Activated T-helper 1 cell treated with anti-CD3 and anti-CD28 coated beads, Interleukin-12 subunit alpha, Interleukin-12 subunit beta, Interleukin-2, Interleukin-4 antibody, amounts not matched to agents 30 ng/mL and 10 ng/mL and 1 ng/mL, durations not matched to agents 14 hours and 24 hours and 36 hours (primary cell): ENCODE measurements at regions of chr11 and their contacts with region 1.

Region 1: GRCh38 chr11:62479631-62480201 is 60.9 kb downstream of the SCGB1A1 start:
- DNase-seq: no peak
- H3K4me3 Mint-ChIP-seq: no peak overlapping the region
- H3K27ac Mint-ChIP-seq: no peak overlapping the region
- H3K4me1 Mint-ChIP-seq: no peaks in the 10 kb centered on the region
- H3K27me3 Mint-ChIP-seq: peaks cover 1% of the 10 kb centered on the region

Region 2: GRCh38 chr11:62394825-62395538 is 84.7 kb before region 1 on chr11:
- intact Hi-C with region 1: loop called (anchors 5 kb)
- DNase-seq: peak; percentile 48
- H3K4me3 Mint-ChIP-seq: no peak overlapping the region
- H3K27ac Mint-ChIP-seq: no peak overlapping the region
- H3K4me1 Mint-ChIP-seq: peaks cover 8% of the 10 kb centered on the region
- H3K27me3 Mint-ChIP-seq: peaks cover 2% of the 10 kb centered on the region

Region 3: GRCh38 chr11:62435846-62436660 is 43.7 kb before region 1 on chr11:
- intact Hi-C with region 1: no loop called
- DNase-seq: no peak
- H3K4me3 Mint-ChIP-seq: no peak overlapping the region
- H3K27ac Mint-ChIP-seq: no peak overlapping the region
- H3K4me1 Mint-ChIP-seq: peaks cover 25% of the 10 kb centered on the region
- H3K27me3 Mint-ChIP-seq: no peaks in the 10 kb centered on the region

Region 4: DNA sequence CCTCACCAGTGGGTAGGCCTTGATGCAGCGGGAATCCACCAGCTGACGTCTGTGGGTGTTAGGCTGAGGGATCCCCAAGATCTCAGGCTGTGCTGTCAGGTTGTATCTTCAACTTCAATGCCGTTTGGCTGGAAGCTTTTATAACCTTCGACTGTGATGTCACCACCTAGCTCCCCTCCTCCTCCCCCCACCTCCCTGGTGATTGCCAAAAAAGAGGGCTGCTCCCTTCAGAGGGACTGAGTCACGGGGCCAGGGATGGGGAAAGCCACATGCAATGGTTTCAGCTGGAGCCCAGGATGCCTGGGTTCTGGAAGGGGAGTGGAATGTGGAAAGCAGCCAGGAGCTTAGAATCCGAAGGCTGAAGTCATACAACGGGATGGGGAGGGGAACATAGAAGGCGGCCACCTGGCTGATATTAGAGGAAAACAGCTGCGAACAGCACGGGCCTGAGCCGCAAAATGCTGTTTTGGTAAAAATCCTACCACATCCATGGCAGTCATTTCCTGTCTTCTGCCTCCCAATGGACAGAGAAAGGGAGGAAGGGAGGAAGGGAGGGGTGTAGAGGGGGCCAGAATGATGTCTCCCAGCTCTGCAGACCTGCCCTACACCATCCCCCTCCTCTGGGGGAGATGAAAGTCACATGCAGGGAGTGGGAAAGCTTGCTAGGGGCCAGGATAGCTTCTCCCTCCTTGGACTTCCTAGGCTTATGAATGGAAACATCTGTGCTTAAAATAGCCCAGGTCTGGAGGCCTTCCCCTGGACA is 209.9 kb after region 1 on chr11 and contains the start of gene LRRN4CL:
- intact Hi-C with region 1: no loop called
- DNase-seq: no peak
- H3K4me3 Mint-ChIP-seq: no peak within 1 kb of the TSS
- H3K27ac Mint-ChIP-seq: no peak within 1 kb of the TSS
- H3K4me1 Mint-ChIP-seq: peaks cover 2% of the 10 kb centered on the region
- H3K27me3 Mint-ChIP-seq: peaks cover 6% of the 10 kb centered on the region
- total RNA-seq, gene LRRN4CL: 0.17 and 0.26 TPM in 2 replicates